ENCODE measurements at regions of chr14 and their contacts with region 1.

Region 1: GRCh38 chr14:76956316-76957090 is 72.0 kb downstream of the IRF2BPL start:
- DNase-seq: no peak
- ATAC-seq: peak; percentile 49
- H3K4me3 ChIP-seq: peak overlapping the region; percentile 68
- H3K27ac ChIP-seq: peak overlapping the region; percentile 100
- H3K4me1 ChIP-seq: peaks cover 73% of the 10 kb centered on the region
- H3K27me3 ChIP-seq: no peaks in the 10 kb centered on the region
- CTCF ChIP-seq: no peak
- EP300 ChIP-seq: peak; percentile 18 to 69; a peak in 2 of 4 replicates
- POLR2A ChIP-seq: peak; percentile 62
- RAD21 ChIP-seq: no peak

Region 2: GRCh38 chr14:76926521-76927251 is 29.8 kb before region 1 on chr14:
- CTCF ChIA-PET with region 1: interaction called, 3 read pairs
- POLR2A ChIA-PET with region 1: interaction called, 4 read pairs
- RAD21 ChIA-PET with region 1: interaction called, 14 read pairs
- SMC1A ChIA-PET with region 1: interaction called, 35 read pairs
- in situ Hi-C with region 1: no loop called
- intact Hi-C with region 1: no loop called
- DNase-seq: no peak
- ATAC-seq: peak; percentile 85
- H3K4me3 ChIP-seq: no peak overlapping the region
- H3K27ac ChIP-seq: no peak overlapping the region
- H3K4me1 ChIP-seq: peaks cover 18% of the 10 kb centered on the region
- H3K27me3 ChIP-seq: no peaks in the 10 kb centered on the region
- CTCF ChIP-seq: no peak
- EP300 ChIP-seq: no peak
- POLR2A ChIP-seq: no peak
- RAD21 ChIP-seq: no peak

Region 3: GRCh38 chr14:77023001-77023996 is 66.8 kb after region 1 on chr14:
- CTCF ChIA-PET with region 1: interaction called, 22 read pairs
- POLR2A ChIA-PET with region 1: interaction called, 48 read pairs
- RAD21 ChIA-PET with region 1: interaction called, 101 read pairs
- SMC1A ChIA-PET with region 1: interaction called, 133 read pairs
- in situ Hi-C with region 1: no loop called
- intact Hi-C with region 1: loop called (anchors 1 kb)
- DNase-seq: no peak
- ATAC-seq: peak; percentile 7
- H3K4me3 ChIP-seq: no peak overlapping the region
- H3K27ac ChIP-seq: peak overlapping the region; percentile 56
- H3K4me1 ChIP-seq: peaks cover 51% of the 10 kb centered on the region
- H3K27me3 ChIP-seq: no peaks in the 10 kb centered on the region
- CTCF ChIP-seq: 0 out of 6 replicates have a peak, but pooled peaks of 2 of the 3 experiments have one; percentile 2 to 14
- EP300 ChIP-seq: no peak
- POLR2A ChIP-seq: no peak
- RAD21 ChIP-seq: no peak

Region 4: DNA sequence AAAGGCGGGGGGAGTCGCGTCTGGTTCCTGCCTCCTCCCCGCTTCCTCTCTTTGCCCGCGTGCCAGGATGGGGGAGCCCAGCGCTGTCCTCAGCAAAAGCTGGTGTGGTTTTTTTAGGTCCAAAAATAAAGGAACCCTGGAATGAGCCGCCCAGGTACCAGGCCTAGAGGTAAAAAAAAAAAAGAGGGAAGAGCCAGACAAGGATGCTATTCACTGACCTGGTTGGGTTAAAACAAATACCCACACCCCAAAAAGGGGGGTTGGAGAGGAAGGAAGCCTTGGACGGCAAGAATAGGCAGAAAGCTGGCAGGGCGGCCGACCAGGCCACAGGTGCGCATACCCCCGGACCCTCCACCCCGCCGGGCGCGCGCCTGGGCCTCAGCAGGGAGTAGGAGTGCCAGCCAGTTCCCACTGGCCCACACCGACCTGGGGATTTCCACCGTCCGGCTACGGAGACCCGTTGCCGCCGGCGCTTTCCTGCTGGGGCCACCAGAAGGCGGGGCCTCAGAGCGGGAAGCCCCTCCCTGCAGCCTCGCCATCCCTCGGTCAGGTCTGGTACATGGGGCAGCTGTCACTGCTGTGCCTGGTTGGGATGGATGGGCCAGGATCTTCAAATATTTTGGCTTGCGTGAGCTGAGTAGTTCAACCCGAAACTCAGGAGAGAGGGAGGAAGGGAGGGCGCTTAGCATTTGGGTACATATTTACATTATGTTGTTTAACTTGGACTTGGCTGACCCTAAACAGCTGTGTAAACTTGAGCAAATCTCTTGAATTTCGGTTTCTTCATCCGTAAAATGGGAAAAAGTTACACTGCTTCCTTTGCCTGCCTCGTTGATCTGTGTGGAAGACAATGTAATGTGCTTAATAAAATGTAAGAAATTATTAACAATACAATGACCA is 77.4 kb after region 1 on chr14:
- CTCF ChIA-PET with region 1: interaction called, 15 read pairs
- POLR2A ChIA-PET with region 1: interaction called, 48 read pairs
- RAD21 ChIA-PET with region 1: interaction called, 101 read pairs
- SMC1A ChIA-PET with region 1: interaction called, 172 read pairs
- in situ Hi-C with region 1: no loop called
- intact Hi-C with region 1: no loop called
- DNase-seq: peak; percentile 72
- ATAC-seq: peak; percentile 86
- H3K4me3 ChIP-seq: peak overlapping the region; percentile 78
- H3K27ac ChIP-seq: peak overlapping the region; percentile 99
- H3K4me1 ChIP-seq: peaks cover 61% of the 10 kb centered on the region
- H3K27me3 ChIP-seq: no peaks in the 10 kb centered on the region
- CTCF ChIP-seq: no peak
- EP300 ChIP-seq: peak in 1 of 2 experiments; percentile 47; a peak in 3 of 4 replicates
- POLR2A ChIP-seq: peak; percentile 85
- RAD21 ChIP-seq: no peak

Region 5: DNA sequence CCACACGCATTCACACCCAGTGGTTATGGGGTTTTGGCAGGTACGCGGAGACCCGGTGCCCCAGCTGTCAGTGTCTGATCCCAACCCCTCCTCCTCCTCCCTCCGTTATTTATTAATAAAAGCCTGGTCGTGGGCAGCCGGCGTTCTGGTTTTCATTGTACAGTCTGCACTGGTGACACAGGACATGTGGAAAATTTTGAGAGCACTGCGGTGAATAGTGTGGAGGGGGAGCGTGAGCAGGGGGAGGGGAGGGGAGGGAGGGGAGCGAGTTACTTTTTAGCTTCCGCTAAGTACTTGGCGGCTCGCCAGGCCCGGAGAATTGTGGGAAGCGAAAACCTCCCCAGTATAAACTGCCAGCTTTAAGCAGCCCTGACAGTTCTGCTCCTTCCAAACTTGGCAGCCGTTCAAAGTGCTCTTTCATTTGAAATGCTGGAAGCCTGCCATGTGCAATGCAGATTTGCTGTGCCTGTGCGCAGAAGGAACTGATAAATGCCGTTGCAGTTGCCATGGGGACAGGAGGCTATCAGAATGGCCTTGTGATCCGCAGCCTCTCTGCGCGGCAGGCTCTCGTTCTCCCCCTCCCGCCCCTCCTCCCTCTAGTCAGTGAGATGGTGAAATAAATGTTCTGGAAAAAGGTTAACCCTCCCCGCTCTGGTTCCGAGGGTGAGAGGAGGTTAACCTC is 83.7 kb after region 1 on chr14:
- CTCF ChIA-PET with region 1: interaction called, 33 read pairs
- POLR2A ChIA-PET with region 1: interaction called, 173 read pairs
- RAD21 ChIA-PET with region 1: interaction called, 125 read pairs
- SMC1A ChIA-PET with region 1: interaction called, 172 read pairs
- in situ Hi-C with region 1: loop called (anchors 5 kb)
- intact Hi-C with region 1: loop called (anchors 1 kb)
- DNase-seq: peak; percentile 99
- ATAC-seq: peak; percentile 75
- H3K4me3 ChIP-seq: peak overlapping the region; percentile 50
- H3K27ac ChIP-seq: peak overlapping the region; percentile 93
- H3K4me1 ChIP-seq: peaks cover 87% of the 10 kb centered on the region
- H3K27me3 ChIP-seq: no peaks in the 10 kb centered on the region
- CTCF ChIP-seq: no peak
- EP300 ChIP-seq: peak; percentile 42 to 61
- POLR2A ChIP-seq: peak; percentile 55; the same call in 1 of the 2 replicates
- RAD21 ChIP-seq: no peak